ENCODE measurements at regions of chr4 and their contacts with region 1.

Region 1: DNA sequence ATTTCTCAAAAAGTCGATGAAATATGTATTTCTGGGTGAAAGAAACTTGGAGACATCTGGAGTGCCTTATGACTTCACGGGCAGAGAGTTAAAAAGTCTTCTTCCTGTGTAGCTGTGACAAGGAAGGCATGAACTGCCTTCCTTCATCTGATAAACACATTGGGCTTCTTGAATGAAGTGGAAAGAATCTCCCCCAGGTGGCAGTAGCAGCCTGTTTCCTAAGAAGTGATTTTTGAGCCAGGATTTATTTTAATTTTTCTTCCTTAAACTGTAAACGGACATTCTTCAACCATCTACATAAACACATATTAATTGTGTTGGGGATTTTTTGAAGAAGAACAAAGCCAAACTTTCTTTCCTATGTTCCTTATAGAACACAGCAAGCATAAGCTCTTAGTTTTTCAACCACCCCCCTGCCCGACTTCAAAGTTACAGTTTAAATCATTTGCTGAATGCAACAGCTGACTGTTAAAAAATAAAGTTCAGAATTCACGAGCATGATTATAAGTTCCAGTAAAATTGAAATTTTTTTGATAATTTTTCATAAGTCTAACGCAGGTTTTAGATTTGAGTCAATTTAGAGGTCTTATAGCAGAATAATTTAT is 980 bp upstream of the GIMD1 start:
- DNase-seq: peak; percentile 40
- ATAC-seq: peak; percentile 44
- H3K4me3 Mint-ChIP-seq: no peak overlapping the region
- H3K27ac Mint-ChIP-seq: no peak overlapping the region
- H3K4me1 Mint-ChIP-seq: peaks cover 1% of the 10 kb centered on the region
- H3K27me3 Mint-ChIP-seq: peaks cover 24% of the 10 kb centered on the region

Region 2: DNA sequence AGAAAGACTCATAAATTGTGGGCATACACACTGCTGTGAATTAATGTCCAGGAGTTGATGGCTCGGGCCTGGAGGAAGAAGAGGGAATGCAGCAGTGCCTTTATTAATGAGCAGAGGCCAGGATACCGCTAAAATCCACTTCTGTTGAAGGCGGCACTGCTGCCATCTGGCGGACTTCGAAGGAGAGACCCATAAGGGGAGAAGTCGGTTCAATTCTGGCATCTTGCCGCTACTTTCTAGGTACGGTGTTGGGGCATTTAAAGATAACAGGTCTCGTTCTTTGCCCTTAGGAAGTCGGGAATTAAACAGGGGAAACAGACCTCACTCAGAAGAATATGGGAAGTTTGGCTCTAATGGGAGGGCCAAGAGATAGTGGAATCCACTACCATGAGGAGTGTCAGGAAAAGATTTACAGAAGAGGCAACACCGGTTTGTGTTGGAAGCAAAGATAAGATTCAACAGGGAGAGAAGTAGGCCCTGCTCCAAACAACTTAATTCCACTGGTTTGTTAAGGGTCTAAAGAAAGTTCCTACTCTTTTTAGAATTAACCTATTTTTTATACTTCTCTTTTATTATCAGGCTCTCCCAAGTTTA is 132.6 kb after region 1 on chr4:
- CTCF ChIA-PET with region 1: interaction called, 8 read pairs
- POLR2A ChIA-PET with region 1: no interaction called
- intact Hi-C with region 1: loop called (anchors 1 kb)
- DNase-seq: peak; percentile 70
- ATAC-seq: peak; percentile 58
- H3K4me3 Mint-ChIP-seq: no peak overlapping the region
- H3K27ac Mint-ChIP-seq: no peak overlapping the region
- H3K4me1 Mint-ChIP-seq: no peaks in the 10 kb centered on the region
- H3K27me3 Mint-ChIP-seq: peaks cover 23% of the 10 kb centered on the region

Region 3: DNA sequence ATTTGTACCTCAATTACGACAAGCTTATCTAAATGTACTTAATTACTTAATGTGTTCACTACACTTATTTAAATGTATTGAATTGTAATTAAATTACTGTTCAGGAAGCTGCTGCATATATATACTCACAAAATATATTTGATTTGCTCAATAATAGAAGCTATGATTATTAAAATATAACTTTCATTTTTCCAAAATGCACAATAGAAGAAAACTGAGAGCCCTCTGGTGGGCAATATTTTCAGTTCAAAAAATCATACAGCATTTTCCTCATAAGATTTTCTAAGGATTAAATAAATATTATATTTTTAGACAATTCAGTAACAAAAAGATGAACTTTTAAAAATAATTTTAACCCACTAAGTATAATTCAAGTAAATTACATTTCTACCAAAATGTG is 449.2 kb after region 1 on chr4:
- CTCF ChIA-PET with region 1: no interaction called
- POLR2A ChIA-PET with region 1: no interaction called
- intact Hi-C with region 1: loop called in 1 of 2 experiments (anchors 10 kb)
- DNase-seq: no peak
- ATAC-seq: no peak
- H3K4me3 Mint-ChIP-seq: no peak overlapping the region
- H3K27ac Mint-ChIP-seq: no peak overlapping the region
- H3K4me1 Mint-ChIP-seq: no peaks in the 10 kb centered on the region
- H3K27me3 Mint-ChIP-seq: no peaks in the 10 kb centered on the region

Region 4: GRCh38 chr4:106898621-106899230 is 529.2 kb after region 1 on chr4:
- CTCF ChIA-PET with region 1: interaction called, 14 read pairs
- POLR2A ChIA-PET with region 1: no interaction called
- intact Hi-C with region 1: loop called in 1 of 2 experiments (anchors 1 kb)
- DNase-seq: peak; percentile 50
- ATAC-seq: no peak
- H3K4me3 Mint-ChIP-seq: no peak overlapping the region
- H3K27ac Mint-ChIP-seq: no peak overlapping the region
- H3K4me1 Mint-ChIP-seq: no peaks in the 10 kb centered on the region
- H3K27me3 Mint-ChIP-seq: peaks cover 2% of the 10 kb centered on the region

Region 5: GRCh38 chr4:107183155-107183774 is 813.7 kb after region 1 on chr4:
- CTCF ChIA-PET with region 1: no interaction called
- POLR2A ChIA-PET with region 1: no interaction called
- intact Hi-C with region 1: loop called in 1 of 2 experiments (anchors 5 kb)
- DNase-seq: peak; percentile 4
- ATAC-seq: peak; percentile 76
- H3K4me3 Mint-ChIP-seq: no peak overlapping the region
- H3K27ac Mint-ChIP-seq: no peak overlapping the region
- H3K4me1 Mint-ChIP-seq: no peaks in the 10 kb centered on the region
- H3K27me3 Mint-ChIP-seq: peaks cover 5% of the 10 kb centered on the region